Natural killer cell (primary cell): ENCODE measurements at regions of chr10 and their contacts with region 1.

Region 1: DNA sequence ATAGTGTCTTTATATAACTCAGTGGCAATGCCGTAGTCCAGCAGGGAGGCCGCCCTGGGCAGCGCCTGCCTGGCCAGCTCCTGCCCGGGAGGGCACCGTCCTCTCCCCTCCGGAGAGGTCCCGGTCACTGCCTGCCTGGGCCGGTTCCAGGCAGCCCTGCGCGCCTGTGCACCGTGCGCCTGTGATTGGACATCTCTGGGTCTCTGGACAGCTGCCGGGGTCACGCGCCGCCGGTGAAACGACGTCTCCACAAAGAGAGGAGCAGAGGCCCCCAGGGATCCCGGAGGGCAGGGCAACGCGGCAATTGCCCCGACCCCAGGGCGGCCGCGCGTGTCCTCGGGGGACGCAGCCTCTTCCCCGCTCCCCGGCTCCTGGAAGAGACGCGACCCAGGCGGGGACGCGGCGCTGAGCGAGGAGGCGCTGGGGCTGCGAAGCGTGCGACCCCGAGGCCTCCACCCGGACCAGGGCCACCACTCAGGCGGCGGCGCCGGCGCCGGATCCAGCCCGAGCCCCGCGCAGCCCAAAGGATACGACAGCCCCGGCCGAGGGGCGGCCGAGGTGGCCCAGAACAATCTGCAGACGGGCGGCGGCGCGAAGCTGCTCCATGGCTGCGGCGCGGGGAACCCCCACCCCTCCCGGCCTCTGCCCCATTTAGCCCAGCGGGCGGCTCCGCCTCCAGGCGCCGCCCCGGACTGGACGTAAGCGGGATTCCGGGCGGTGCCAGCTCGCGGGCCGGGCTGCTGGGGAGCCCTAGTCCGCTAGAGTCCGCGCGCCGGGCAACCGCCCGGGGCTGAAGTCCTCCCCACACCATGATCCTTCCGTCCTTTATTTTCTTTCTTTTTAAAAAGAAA is at the start of gene PHYH:
- DNase-seq: peak; percentile 86 to 92
- ATAC-seq: peak; percentile 72 to 83 (median 76)
- H3K4me3 ChIP-seq: peak within 1 kb of the TSS; percentile 67
- H3K4me3 Mint-ChIP-seq: peak within 1 kb of the TSS; percentile 89
- H3K27ac ChIP-seq: peak within 1 kb of the TSS; percentile 75
- H3K27ac Mint-ChIP-seq: peak within 1 kb of the TSS; percentile 98 to 99
- H3K4me1 ChIP-seq: peaks cover 28% of the 10 kb centered on the region
- H3K4me1 Mint-ChIP-seq: peaks cover 19 to 28% of the 10 kb centered on the region in 2 donors
- H3K27me3 ChIP-seq: no peaks in the 10 kb centered on the region
- H3K27me3 Mint-ChIP-seq: no peaks in the 10 kb centered on the region
- CTCF ChIP-seq: no peak
- total RNA-seq, gene PHYH: 6.9 to 7.3 (median 7.2) TPM

Region 2: GRCh38 chr10:13160934-13161856 is 138.5 kb before region 1 on chr10 and contains the start of gene MCM10:
- intact Hi-C with region 1: loop called (anchors 1 kb)
- DNase-seq: peak; percentile 95 to 99
- ATAC-seq: peak; percentile 99 to 100 (median 99)
- H3K4me3 ChIP-seq: peak within 1 kb of the TSS; percentile 35
- H3K4me3 Mint-ChIP-seq: peak within 1 kb of the TSS; percentile 95
- H3K27ac ChIP-seq: no peak within 1 kb of the TSS
- H3K27ac Mint-ChIP-seq: peak within 1 kb of the TSS; percentile 87 to 93
- H3K4me1 ChIP-seq: peaks cover 9% of the 10 kb centered on the region
- H3K4me1 Mint-ChIP-seq: peaks cover 21 to 27% of the 10 kb centered on the region in 2 donors
- H3K27me3 ChIP-seq: no peaks in the 10 kb centered on the region
- H3K27me3 Mint-ChIP-seq: no peaks in the 10 kb centered on the region
- CTCF ChIP-seq: peak; percentile 98
- total RNA-seq, gene MCM10: 0.73 to 2.9 (median 1.3) TPM

Region 3: GRCh38 chr10:13271552-13272163 is 28.0 kb before region 1 on chr10:
- intact Hi-C with region 1: loop called (anchors 1 kb)
- DNase-seq: peak; percentile 20 to 73
- ATAC-seq: peak; percentile 51 to 75 (median 68)
- H3K4me3 ChIP-seq: no peak overlapping the region
- H3K4me3 Mint-ChIP-seq: no peak overlapping the region
- H3K27ac ChIP-seq: no peak overlapping the region
- H3K27ac Mint-ChIP-seq: peak overlapping the region in 1 of 2 donors; percentile 29
- H3K4me1 ChIP-seq: no peaks in the 10 kb centered on the region
- H3K4me1 Mint-ChIP-seq: peaks cover 0 to 5% of the 10 kb centered on the region in 2 donors
- H3K27me3 ChIP-seq: no peaks in the 10 kb centered on the region
- H3K27me3 Mint-ChIP-seq: no peaks in the 10 kb centered on the region
- CTCF ChIP-seq: no peak

Region 4: GRCh38 chr10:13348216-13349017 is 48.8 kb after region 1 on chr10 and contains the start of gene SEPHS1:
- intact Hi-C with region 1: loop called (anchors 5 kb)
- DNase-seq: peak; percentile 58 to 89
- ATAC-seq: peak; percentile 60 to 71 (median 68)
- H3K4me3 ChIP-seq: peak within 1 kb of the TSS; percentile 83
- H3K4me3 Mint-ChIP-seq: peak within 1 kb of the TSS; percentile 93
- H3K27ac ChIP-seq: peak within 1 kb of the TSS; percentile 77
- H3K27ac Mint-ChIP-seq: peak within 1 kb of the TSS; percentile 56 to 67
- H3K4me1 ChIP-seq: peaks cover 37% of the 10 kb centered on the region
- H3K4me1 Mint-ChIP-seq: peaks cover 19 to 25% of the 10 kb centered on the region in 2 donors
- H3K27me3 ChIP-seq: no peaks in the 10 kb centered on the region
- H3K27me3 Mint-ChIP-seq: peaks cover 18 to 22% of the 10 kb centered on the region in 2 donors
- CTCF ChIP-seq: no peak
- total RNA-seq, gene SEPHS1: 20.4 to 28.2 (median 23.4) TPM